CD4-positive, alpha-beta T cell (primary cell): ENCODE measurements at regions of chr15 and their contacts with region 1.

Region 1: DNA sequence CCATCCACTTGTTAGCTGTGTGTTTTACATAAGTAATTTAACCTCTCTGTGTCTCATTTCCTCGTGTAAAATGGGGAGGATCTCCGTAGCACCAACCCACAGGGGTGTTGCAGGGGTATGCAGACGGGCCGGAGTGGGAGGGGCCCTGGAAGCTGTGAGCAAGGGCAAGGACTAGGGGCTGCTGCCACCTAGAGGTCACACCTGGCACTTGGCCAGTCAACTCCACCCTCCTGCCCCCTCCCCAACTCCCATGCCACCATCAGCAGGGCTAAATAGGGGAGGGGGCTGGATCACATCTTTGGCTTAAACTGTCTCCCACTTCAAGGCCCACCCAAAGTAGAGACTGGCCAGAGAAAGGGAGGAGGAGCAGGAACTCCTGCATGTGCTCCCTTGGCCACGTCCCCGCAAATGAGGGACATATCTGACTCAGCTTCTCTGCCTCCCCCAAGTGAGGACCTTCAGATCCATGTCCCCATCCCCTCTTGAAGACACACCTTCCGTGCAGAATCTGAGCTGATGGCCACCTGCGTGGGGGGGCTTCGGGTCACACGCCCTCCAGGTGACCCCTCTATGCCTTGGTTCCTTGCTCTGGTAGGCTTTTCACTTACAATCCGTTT is 2.6 kb downstream of the CCDC9B start:
- DNase-seq: peak; percentile 64 to 89 (median 73)
- ATAC-seq: peak; percentile 81
- H3K4me3 ChIP-seq: no peak overlapping the region
- H3K4me3 Mint-ChIP-seq: no peak overlapping the region
- H3K27ac ChIP-seq: no peak overlapping the region
- H3K27ac Mint-ChIP-seq: no peak overlapping the region
- H3K4me1 ChIP-seq: peaks cover 31% of the 10 kb centered on the region
- H3K4me1 Mint-ChIP-seq: peaks cover 21% of the 10 kb centered on the region
- H3K27me3 ChIP-seq: no peaks in the 10 kb centered on the region
- H3K27me3 Mint-ChIP-seq: no peaks in the 10 kb centered on the region
- CTCF ChIP-seq: peak; percentile 90

Region 2: DNA sequence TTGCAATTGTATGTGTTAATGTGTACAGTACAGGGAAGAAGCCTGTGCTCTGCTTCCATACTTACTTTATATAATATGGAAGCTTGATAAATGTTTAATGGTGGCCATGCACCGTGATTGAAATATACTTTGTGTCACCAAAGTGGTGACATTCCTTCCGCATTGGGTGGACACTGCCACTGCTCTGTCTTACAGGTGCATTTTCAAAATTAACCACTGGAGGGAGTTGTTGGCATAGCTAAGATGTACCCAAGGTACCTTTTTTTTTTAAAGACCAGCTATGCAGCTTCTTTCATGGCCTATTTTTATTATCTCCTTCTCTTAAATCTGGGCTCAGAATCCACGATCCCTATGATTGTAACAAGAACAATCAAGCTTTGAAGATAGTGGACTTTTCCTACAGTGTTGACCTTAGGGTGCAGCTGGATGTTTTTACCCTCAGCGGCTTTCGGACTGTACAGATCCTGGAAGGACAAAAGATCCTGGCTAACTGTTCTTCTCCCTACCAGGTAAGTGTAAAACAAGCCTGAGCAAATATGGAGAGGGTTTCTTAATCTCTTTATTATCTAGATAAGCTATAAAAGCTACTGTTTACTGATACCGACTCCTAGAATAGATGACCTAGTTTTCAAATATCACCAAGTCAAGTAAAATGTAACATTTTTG is 120.9 kb before region 1 on chr15:
- CTCF ChIA-PET with region 1: interaction called, 7 read pairs
- POLR2A ChIA-PET with region 1: no interaction called
- intact Hi-C with region 1: loop called (anchors 5 kb)
- DNase-seq: peak in 11 of 14 experiments; percentile 9 to 85 (median 31)
- ATAC-seq: peak; percentile 99
- H3K4me3 ChIP-seq: no peak overlapping the region
- H3K4me3 Mint-ChIP-seq: no peak overlapping the region
- H3K27ac ChIP-seq: no peak overlapping the region
- H3K27ac Mint-ChIP-seq: no peak overlapping the region
- H3K4me1 ChIP-seq: no peaks in the 10 kb centered on the region
- H3K4me1 Mint-ChIP-seq: no peaks in the 10 kb centered on the region
- H3K27me3 ChIP-seq: no peaks in the 10 kb centered on the region
- H3K27me3 Mint-ChIP-seq: no peaks in the 10 kb centered on the region
- CTCF ChIP-seq: peak; percentile 90

Region 3: GRCh38 chr15:40307421-40308211 is 30.5 kb before region 1 on chr15 and contains the start of gene PLCB2:
- CTCF ChIA-PET with region 1: interaction called, 36 read pairs
- POLR2A ChIA-PET with region 1: interaction called, 34 read pairs
- intact Hi-C with region 1: loop called in 1 of 2 experiments (anchors 1 kb)
- DNase-seq: peak; percentile 49 to 87 (median 68)
- ATAC-seq: peak; percentile 82
- H3K4me3 ChIP-seq: peak within 1 kb of the TSS; percentile 98
- H3K4me3 Mint-ChIP-seq: peak within 1 kb of the TSS; percentile 96
- H3K27ac ChIP-seq: peak within 1 kb of the TSS; percentile 74 to 79
- H3K27ac Mint-ChIP-seq: peak within 1 kb of the TSS; percentile 95
- H3K4me1 ChIP-seq: peaks cover 49% of the 10 kb centered on the region
- H3K4me1 Mint-ChIP-seq: peaks cover 52% of the 10 kb centered on the region
- H3K27me3 ChIP-seq: no peaks in the 10 kb centered on the region
- H3K27me3 Mint-ChIP-seq: no peaks in the 10 kb centered on the region
- CTCF ChIP-seq: peak; percentile 44
- total RNA-seq, gene PLCB2: 206 to 222 TPM

Region 4: GRCh38 chr15:40316931-40317330 is 21.2 kb before region 1 on chr15:
- CTCF ChIA-PET with region 1: interaction called, 48 read pairs
- POLR2A ChIA-PET with region 1: interaction called, 7 read pairs
- intact Hi-C with region 1: loop called (anchors 1 kb)
- DNase-seq: no peak
- ATAC-seq: no peak
- H3K4me3 ChIP-seq: no peak overlapping the region
- H3K4me3 Mint-ChIP-seq: no peak overlapping the region
- H3K27ac ChIP-seq: no peak overlapping the region
- H3K27ac Mint-ChIP-seq: no peak overlapping the region
- H3K4me1 ChIP-seq: peaks cover 24% of the 10 kb centered on the region
- H3K4me1 Mint-ChIP-seq: peaks cover 22% of the 10 kb centered on the region
- H3K27me3 ChIP-seq: no peaks in the 10 kb centered on the region
- H3K27me3 Mint-ChIP-seq: no peaks in the 10 kb centered on the region
- CTCF ChIP-seq: no peak

Region 5: GRCh38 chr15:40323239-40323952 is 14.8 kb before region 1 on chr15 and contains the start of gene INAFM2:
- CTCF ChIA-PET with region 1: interaction called, 48 read pairs
- POLR2A ChIA-PET with region 1: interaction called, 18 read pairs
- intact Hi-C with region 1: loop called (anchors 1 kb)
- DNase-seq: peak; percentile 75 to 96 (median 87)
- ATAC-seq: peak; percentile 84
- H3K4me3 ChIP-seq: peak within 1 kb of the TSS; percentile 55
- H3K4me3 Mint-ChIP-seq: peak within 1 kb of the TSS; percentile 92
- H3K27ac ChIP-seq: peak within 1 kb of the TSS; percentile 10 to 41
- H3K27ac Mint-ChIP-seq: peak within 1 kb of the TSS; percentile 79
- H3K4me1 ChIP-seq: peaks cover 32% of the 10 kb centered on the region
- H3K4me1 Mint-ChIP-seq: peaks cover 36% of the 10 kb centered on the region
- H3K27me3 ChIP-seq: no peaks in the 10 kb centered on the region
- H3K27me3 Mint-ChIP-seq: no peaks in the 10 kb centered on the region
- CTCF ChIP-seq: peak; percentile 59
- total RNA-seq, gene INAFM2: 6.8 to 7.0 TPM

Region 6: GRCh38 chr15:40500584-40501330 is 162.6 kb after region 1 on chr15:
- CTCF ChIA-PET with region 1: no interaction called
- POLR2A ChIA-PET with region 1: no interaction called
- intact Hi-C with region 1: no loop called
- DNase-seq: no peak
- ATAC-seq: no peak
- H3K4me3 ChIP-seq: no peak overlapping the region
- H3K4me3 Mint-ChIP-seq: no peak overlapping the region
- H3K27ac ChIP-seq: no peak overlapping the region
- H3K27ac Mint-ChIP-seq: no peak overlapping the region
- H3K4me1 ChIP-seq: no peaks in the 10 kb centered on the region
- H3K4me1 Mint-ChIP-seq: no peaks in the 10 kb centered on the region
- H3K27me3 ChIP-seq: peaks cover 6 to 16% of the 10 kb centered on the region in 2 experiments
- H3K27me3 Mint-ChIP-seq: peaks cover 30% of the 10 kb centered on the region
- CTCF ChIP-seq: no peak